ENCODE measurements at regions of chr10 and their contacts with region 1.

Region 1: GRCh38 chr10:15620337-15620736 is 99.4 kb downstream of the ITGA8 start:
- DNase-seq: no peak
- ATAC-seq: no peak
- H3K4me3 ChIP-seq: no peak overlapping the region
- H3K4me3 Mint-ChIP-seq: no peak overlapping the region
- H3K27ac ChIP-seq: no peak overlapping the region
- H3K27ac Mint-ChIP-seq: no peak overlapping the region
- H3K4me1 ChIP-seq: no peaks in the 10 kb centered on the region
- H3K4me1 Mint-ChIP-seq: no peaks in the 10 kb centered on the region
- H3K27me3 ChIP-seq: no peaks in the 10 kb centered on the region
- H3K27me3 Mint-ChIP-seq: peaks cover 4 to 13% of the 10 kb centered on the region in 2 donors

Region 2: GRCh38 chr10:15122477-15123030 is 497.8 kb before region 1 on chr10:
- CTCF ChIA-PET with region 1: no interaction called
- POLR2A ChIA-PET with region 1: no interaction called
- DNase-seq: no peak
- ATAC-seq: peak in 1 of 4 experiments; percentile 32
- H3K4me3 ChIP-seq: no peak overlapping the region
- H3K4me3 Mint-ChIP-seq: no peak overlapping the region
- H3K27ac ChIP-seq: no peak overlapping the region
- H3K27ac Mint-ChIP-seq: peak overlapping the region; percentile 15 to 22
- H3K4me1 ChIP-seq: no peaks in the 10 kb centered on the region
- H3K4me1 Mint-ChIP-seq: peaks cover 6 to 16% (median 6%) of the 10 kb centered on the region in 3 donors
- H3K27me3 ChIP-seq: no peaks in the 10 kb centered on the region
- H3K27me3 Mint-ChIP-seq: no peaks in the 10 kb centered on the region

Region 3: DNA sequence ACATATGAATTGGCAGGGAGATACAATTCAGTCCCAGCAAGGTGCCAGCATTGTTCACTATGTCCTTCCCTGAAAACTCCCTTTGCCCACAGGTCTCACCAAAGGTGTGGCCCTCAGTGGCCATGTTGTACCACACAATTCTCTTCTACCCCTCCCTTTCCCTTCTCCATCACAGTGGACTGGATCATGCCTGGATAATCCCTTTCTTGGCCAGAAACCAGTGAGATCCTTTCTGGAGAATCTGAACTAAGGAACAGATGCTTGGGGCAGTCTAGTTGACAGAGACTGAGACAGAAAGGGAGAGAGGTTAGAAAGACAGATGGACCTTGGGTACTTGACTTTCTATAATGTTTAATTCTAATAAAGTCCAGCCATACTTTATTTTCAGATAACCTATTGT is 461.4 kb before region 1 on chr10:
- CTCF ChIA-PET with region 1: no interaction called
- POLR2A ChIA-PET with region 1: no interaction called
- DNase-seq: no peak
- ATAC-seq: no peak
- H3K4me3 ChIP-seq: no peak overlapping the region
- H3K4me3 Mint-ChIP-seq: no peak overlapping the region
- H3K27ac ChIP-seq: no peak overlapping the region
- H3K27ac Mint-ChIP-seq: no peak overlapping the region
- H3K4me1 ChIP-seq: peaks cover 2 to 6% of the 10 kb centered on the region in 2 experiments
- H3K4me1 Mint-ChIP-seq: peaks cover 53 to 70% (median 67%) of the 10 kb centered on the region in 3 donors
- H3K27me3 ChIP-seq: no peaks in the 10 kb centered on the region
- H3K27me3 Mint-ChIP-seq: no peaks in the 10 kb centered on the region

Region 4: GRCh38 chr10:15571575-15571974 is 48.8 kb before region 1 on chr10:
- CTCF ChIA-PET with region 1: no interaction called
- POLR2A ChIA-PET with region 1: interaction called in 1 of 2 experiments, 13 read pairs
- DNase-seq: no peak
- ATAC-seq: no peak
- H3K4me3 ChIP-seq: no peak overlapping the region
- H3K4me3 Mint-ChIP-seq: no peak overlapping the region
- H3K27ac ChIP-seq: no peak overlapping the region
- H3K27ac Mint-ChIP-seq: no peak overlapping the region
- H3K4me1 ChIP-seq: no peaks in the 10 kb centered on the region
- H3K4me1 Mint-ChIP-seq: no peaks in the 10 kb centered on the region
- H3K27me3 ChIP-seq: no peaks in the 10 kb centered on the region
- H3K27me3 Mint-ChIP-seq: peaks cover 9 to 10% of the 10 kb centered on the region in 2 donors

Measured in T-cell (primary cell).